Esophagus muscularis mucosa (tissue), 4 donors: ENCODE measurements at regions of chr17 and their contacts with region 1.

Region 1: DNA sequence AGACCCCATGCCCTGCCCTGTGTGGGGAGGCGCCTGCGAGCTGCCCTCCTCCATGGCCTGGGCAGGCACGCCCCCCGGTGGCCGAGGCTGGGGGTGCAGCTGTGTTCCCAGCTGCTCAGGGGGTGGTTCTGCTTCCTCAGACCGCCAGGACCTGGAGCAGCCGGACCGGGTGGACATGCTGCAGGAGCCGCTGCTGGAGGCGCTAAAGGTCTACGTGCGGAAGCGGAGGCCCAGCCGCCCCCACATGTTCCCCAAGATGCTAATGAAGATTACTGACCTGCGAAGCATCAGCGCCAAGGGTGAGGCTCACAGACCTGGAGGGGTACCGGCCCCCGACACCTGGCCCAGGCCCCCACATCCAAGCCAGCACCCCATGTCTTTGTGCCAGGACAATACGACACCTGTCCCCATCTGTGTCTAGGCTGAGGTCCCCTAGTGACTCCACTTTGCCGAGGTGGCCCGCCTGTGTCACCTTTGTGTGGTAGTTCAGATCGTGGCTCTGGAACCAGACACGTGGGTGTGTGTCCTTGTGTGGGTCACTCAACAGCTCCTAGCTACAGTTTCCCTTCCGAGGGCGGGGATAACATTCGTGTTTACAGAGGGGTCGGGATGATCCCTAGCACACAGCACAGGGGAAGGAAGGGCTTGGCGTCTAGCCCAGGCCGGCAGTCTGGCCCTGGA is 9.3 kb downstream of the GJD3 start:
- DNase-seq: no peak
- H3K4me3 ChIP-seq: no peak overlapping the region
- H3K27ac ChIP-seq: peak overlapping the region; percentile 55 to 66 (median 61)
- H3K4me1 ChIP-seq: peaks cover 27 to 79% (median 64%) of the 10 kb centered on the region in 4 donors
- H3K27me3 ChIP-seq: no peaks in the 10 kb centered on the region
- CTCF ChIP-seq: peak in 2 of 3 experiments; percentile 96 to 99
- EP300 ChIP-seq: no peak
- POLR2A ChIP-seq: no peak

Region 2: GRCh38 chr17:40264458-40265185 is 90.6 kb before region 1 on chr17:
- intact Hi-C with region 1: no loop called
- DNase-seq: no peak
- H3K4me3 ChIP-seq: no peak overlapping the region
- H3K27ac ChIP-seq: no peak overlapping the region
- H3K4me1 ChIP-seq: no peaks in the 10 kb centered on the region
- H3K27me3 ChIP-seq: no peaks in the 10 kb centered on the region
- CTCF ChIP-seq: no peak
- EP300 ChIP-seq: no peak
- POLR2A ChIP-seq: no peak

Region 3: GRCh38 chr17:40373324-40373723 is 18.1 kb after region 1 on chr17:
- intact Hi-C with region 1: no loop called
- DNase-seq: no peak
- H3K4me3 ChIP-seq: no peak overlapping the region
- H3K27ac ChIP-seq: no peak overlapping the region
- H3K4me1 ChIP-seq: no peaks in the 10 kb centered on the region
- H3K27me3 ChIP-seq: no peaks in the 10 kb centered on the region
- CTCF ChIP-seq: no peak
- EP300 ChIP-seq: no peak
- POLR2A ChIP-seq: no peak

Region 4: DNA sequence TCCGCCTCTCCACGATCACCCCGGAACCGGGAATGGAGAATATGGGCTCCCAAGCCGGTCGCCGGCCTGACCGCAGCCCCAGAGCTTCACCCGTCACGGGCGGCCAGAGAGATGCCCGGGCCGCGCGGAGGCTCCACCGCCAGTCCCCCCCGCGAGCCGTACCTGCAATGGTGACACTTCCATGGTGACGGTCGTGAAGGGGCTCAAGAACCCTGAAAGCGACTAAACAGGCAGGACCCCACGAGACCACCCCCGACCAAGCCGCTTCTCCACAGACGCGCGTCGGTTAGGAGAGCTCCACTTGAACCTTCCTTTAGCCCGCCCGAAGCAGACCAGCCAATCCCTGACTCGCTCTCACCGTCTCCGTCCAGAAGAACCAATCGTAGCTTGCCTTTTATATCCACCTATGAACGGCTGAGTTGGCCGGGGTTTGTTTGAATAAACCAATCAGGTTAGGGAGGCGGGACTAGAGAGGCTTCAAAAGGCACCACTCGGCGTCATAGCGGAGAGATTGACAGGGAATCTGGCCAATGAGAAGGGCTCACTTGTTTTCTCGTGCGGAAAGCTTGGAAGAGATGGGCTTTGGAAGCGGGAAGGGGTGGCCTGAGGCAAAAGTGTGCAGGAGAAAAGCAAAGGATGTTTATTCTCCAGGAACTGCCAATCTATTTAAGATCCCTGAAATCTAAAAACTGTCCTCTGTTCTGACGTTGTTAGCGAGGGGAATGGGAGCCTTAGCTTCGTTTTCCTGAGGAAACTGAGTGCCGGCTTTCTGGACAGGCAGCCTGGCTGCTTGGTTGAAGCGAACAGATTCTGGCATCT is 62.6 kb after region 1 on chr17 and contains the start of gene TOP2A:
- intact Hi-C with region 1: loop called (anchors 2 kb)
- DNase-seq: peak; percentile 100
- H3K4me3 ChIP-seq: peak within 1 kb of the TSS; percentile 60 to 71 (median 63)
- H3K27ac ChIP-seq: peak within 1 kb of the TSS; percentile 64 to 82 (median 76)
- H3K4me1 ChIP-seq: peaks cover 12 to 35% (median 30%) of the 10 kb centered on the region in 4 donors
- H3K27me3 ChIP-seq: peaks cover 0 to 8% (median 0%) of the 10 kb centered on the region in 4 donors
- CTCF ChIP-seq: peak in 1 of 3 experiments; percentile 50
- EP300 ChIP-seq: no peak
- POLR2A ChIP-seq: no peak
- total RNA-seq, gene TOP2A: under 0.01 to 1.4 (median 0.30) TPM

Region 5: DNA sequence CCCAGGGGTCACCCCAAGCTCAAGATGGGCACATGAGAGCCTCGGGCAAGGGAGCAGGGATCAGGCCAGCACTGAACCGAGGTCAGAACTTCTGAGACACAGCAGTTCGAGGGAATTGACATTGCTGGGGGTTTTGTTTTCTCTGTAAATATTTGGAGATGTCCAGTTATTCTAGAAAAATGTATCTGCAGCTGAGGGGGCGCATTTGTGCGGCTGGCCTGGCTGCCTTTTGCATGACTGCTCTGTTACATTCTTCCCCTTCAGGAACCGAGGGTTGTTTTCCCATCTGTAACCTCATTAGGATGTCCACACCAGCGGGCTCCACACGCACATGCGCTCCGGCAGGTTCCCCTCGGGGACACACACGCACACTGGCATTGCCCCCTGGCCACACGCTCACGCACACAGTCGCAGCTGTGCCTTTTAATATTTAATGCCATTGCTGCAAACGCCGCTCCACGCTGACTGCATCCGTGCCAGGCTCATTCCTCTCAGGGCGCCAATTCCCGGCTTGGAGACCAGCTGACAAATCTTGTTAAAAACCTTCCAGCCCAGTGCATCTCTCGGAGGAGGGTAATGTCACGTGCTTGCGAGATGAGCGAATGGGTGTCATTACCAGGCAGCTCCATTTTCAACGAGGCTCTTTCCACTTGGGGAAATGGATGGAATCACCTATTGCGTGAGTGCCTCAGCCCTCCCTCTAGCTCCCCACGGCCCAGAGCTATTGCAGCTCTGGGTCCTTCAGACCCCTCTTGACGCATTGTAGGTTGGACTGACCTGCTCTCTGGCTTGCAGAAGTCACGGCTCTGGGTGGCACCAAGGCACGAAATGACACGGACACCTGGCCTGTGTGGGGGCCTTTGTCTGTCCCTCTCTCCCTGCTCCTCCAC is 196.9 kb after region 1 on chr17:
- intact Hi-C with region 1: no loop called
- DNase-seq: peak; percentile 91
- H3K4me3 ChIP-seq: no peak overlapping the region
- H3K27ac ChIP-seq: peak overlapping the region; percentile 71 to 83 (median 81)
- H3K4me1 ChIP-seq: peaks cover 86 to 97% (median 94%) of the 10 kb centered on the region in 4 donors
- H3K27me3 ChIP-seq: no peaks in the 10 kb centered on the region
- CTCF ChIP-seq: no peak
- EP300 ChIP-seq: no peak
- POLR2A ChIP-seq: no peak